ENCODE measurements at regions of chr6 and their contacts with region 1.

Region 1: DNA sequence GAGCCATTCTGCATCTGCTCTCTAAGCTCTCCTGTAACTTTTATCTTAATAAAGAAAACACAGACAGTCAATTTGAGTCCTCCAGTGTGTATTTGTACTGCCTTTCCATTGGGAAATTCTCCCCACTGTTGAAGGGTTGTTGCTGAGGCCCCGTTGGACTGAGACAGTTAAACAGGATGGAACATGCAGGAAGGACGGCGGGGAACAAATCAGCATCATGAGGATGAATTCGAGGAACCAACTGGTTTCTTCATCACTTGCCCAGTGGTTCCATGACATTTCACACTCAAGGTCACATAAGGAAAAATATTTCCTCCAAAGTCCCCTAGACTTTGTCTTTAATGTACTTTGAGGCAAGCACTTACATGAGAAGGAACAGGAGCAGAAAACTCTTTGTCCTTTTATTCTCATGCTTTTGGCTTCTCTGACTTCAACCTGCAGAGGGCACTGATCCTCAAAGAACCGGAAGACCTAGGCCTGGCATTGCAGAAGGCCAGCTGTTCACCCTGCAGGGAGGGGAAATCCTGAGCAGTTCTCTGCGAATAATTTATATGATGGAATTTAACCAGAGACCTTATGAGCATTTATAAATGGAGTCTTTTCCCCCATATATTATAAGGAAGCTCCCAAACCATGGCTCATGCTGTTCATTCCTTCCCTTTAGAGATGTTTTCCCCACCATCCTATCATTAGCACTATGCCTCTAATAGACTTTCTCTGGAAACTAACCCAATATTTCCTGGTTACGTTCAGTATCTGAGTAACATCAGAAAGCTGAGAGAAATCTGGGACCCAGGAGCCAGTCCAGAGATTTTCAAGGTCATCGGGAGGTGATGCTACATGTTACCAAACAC is 55.2 kb upstream of the ADGRF1 start:
- DNase-seq: peak; percentile 55 to 78
- ATAC-seq: peak; percentile 94 to 98
- H3K4me3 ChIP-seq: no peak overlapping the region
- H3K27ac ChIP-seq: peak overlapping the region; percentile 58 to 64
- H3K4me1 ChIP-seq: peaks cover 20% of the 10 kb centered on the region
- CTCF ChIP-seq: peak; percentile 77
- EP300 ChIP-seq: no peak
- POLR2A ChIP-seq: no peak
- RAD21 ChIP-seq: peak; percentile 95

Region 2: GRCh38 chr6:46175446-46175845 is 921.9 kb before region 1 on chr6:
- CTCF ChIA-PET with region 1: no interaction called
- POLR2A ChIA-PET with region 1: no interaction called
- DNase-seq: no peak
- ATAC-seq: no peak
- H3K4me3 ChIP-seq: no peak overlapping the region
- H3K27ac ChIP-seq: no peak overlapping the region
- H3K4me1 ChIP-seq: no peaks in the 10 kb centered on the region
- CTCF ChIP-seq: no peak
- EP300 ChIP-seq: no peak
- POLR2A ChIP-seq: no peak
- RAD21 ChIP-seq: no peak

Region 3: DNA sequence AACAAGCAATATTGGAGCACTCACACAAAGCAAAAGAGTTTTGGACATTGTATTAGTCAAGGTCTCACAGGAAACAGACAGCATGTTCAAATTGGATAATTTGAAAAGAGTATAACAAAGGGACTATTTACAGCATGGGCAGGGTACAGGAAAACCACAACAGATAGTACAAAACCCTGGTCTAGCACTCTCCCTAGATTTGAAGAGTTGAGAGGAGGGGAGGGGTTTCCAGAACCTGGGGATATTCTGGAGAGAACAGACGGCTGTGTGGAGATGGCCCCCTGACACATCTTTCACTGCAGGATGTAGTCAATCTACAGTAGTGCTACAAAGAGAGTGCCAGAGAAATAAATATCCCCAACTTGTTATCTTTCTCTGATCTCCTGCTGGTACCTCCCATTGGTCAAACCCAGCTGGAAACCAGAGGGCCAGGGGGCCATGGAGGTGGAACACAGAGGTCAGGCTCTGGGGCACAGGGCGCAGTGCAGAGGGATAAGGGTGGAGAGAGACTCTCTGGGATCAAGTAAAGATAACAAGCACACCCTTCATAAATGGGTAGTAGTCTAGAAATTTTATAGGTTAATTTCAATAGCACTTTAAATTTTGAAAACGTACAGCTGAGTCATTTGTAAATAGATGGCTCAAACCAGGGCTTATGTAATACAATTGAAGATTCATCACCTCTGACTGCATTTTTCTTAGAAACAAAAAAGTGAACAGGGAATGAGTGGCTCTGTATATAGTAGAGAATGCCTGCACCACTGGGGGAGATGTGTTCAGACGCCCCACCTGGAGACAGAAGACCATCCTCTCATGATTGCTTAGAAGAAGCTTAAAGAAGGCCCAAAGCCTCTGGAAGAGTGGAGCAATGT is 631.8 kb before region 1 on chr6:
- CTCF ChIA-PET with region 1: no interaction called
- POLR2A ChIA-PET with region 1: no interaction called
- DNase-seq: no peak
- ATAC-seq: no peak
- H3K4me3 ChIP-seq: no peak overlapping the region
- H3K27ac ChIP-seq: no peak overlapping the region
- H3K4me1 ChIP-seq: no peaks in the 10 kb centered on the region
- CTCF ChIP-seq: no peak
- EP300 ChIP-seq: no peak
- POLR2A ChIP-seq: no peak
- RAD21 ChIP-seq: no peak

Region 4: GRCh38 chr6:47168183-47168582 is 70.9 kb after region 1 on chr6:
- CTCF ChIA-PET with region 1: interaction called, 15 read pairs
- POLR2A ChIA-PET with region 1: no interaction called
- DNase-seq: peak; percentile 66 to 91
- ATAC-seq: peak; percentile 99 to 100
- H3K4me3 ChIP-seq: no peak overlapping the region
- H3K27ac ChIP-seq: peak overlapping the region; percentile 80 to 88
- H3K4me1 ChIP-seq: peaks cover 37% of the 10 kb centered on the region
- CTCF ChIP-seq: no peak
- EP300 ChIP-seq: peak; percentile 87 to 88; a peak in 3 of 5 replicates
- POLR2A ChIP-seq: no peak
- RAD21 ChIP-seq: peak; percentile 12 to 56; a peak in 4 of 5 replicates